ENCODE measurements at regions of chr12 and their contacts with region 1.

Region 1: DNA sequence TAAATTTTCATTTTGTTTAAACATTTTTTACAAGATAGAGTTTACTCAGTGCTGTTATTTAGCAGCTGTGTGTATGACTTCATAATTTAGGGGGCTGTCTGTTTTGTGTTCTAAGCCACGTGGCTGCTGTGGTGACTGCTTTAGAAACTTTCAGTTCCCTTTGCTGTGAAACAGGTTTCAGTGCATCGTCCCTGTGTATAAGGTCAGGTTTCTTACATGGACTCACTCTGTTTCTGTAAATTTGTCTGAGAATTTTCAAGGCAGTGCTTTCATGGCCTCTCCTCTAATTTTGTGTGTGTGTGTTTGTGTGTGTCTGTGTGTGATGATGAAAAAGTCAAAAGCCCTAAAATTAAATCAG is 32.4 kb downstream of the BICD1 start:
- DNase-seq: peak; percentile 89
- ATAC-seq: peak; percentile 84
- H3K4me3 ChIP-seq: peak overlapping the region; percentile 32 to 72 (median 55)
- H3K4me3 Mint-ChIP-seq: peak overlapping the region; percentile 95
- H3K27ac ChIP-seq: peak overlapping the region; percentile 95 to 97
- H3K27ac Mint-ChIP-seq: peak overlapping the region; percentile 99
- H3K4me1 ChIP-seq: peaks cover 31 to 39% of the 10 kb centered on the region in 2 donors
- H3K4me1 Mint-ChIP-seq: peaks cover 57% of the 10 kb centered on the region
- H3K27me3 ChIP-seq: no peaks in the 10 kb centered on the region
- H3K27me3 Mint-ChIP-seq: no peaks in the 10 kb centered on the region
- CTCF ChIP-seq: no peak

Region 2: GRCh38 chr12:31325877-31326631 is 813.0 kb before region 1 on chr12 and contains the start of gene SINHCAF:
- CTCF ChIA-PET with region 1: no interaction called
- POLR2A ChIA-PET with region 1: no interaction called
- intact Hi-C with region 1: loop called (anchors 10 kb)
- DNase-seq: peak; percentile 99
- ATAC-seq: peak; percentile 64
- H3K4me3 ChIP-seq: peak within 1 kb of the TSS; percentile 70 to 96 (median 93)
- H3K4me3 Mint-ChIP-seq: peak within 1 kb of the TSS; percentile 98
- H3K27ac ChIP-seq: peak within 1 kb of the TSS; percentile 97
- H3K27ac Mint-ChIP-seq: peak within 1 kb of the TSS; percentile 99
- H3K4me1 ChIP-seq: peaks cover 27 to 36% of the 10 kb centered on the region in 2 donors
- H3K4me1 Mint-ChIP-seq: peaks cover 39% of the 10 kb centered on the region
- H3K27me3 ChIP-seq: no peaks in the 10 kb centered on the region
- H3K27me3 Mint-ChIP-seq: no peaks in the 10 kb centered on the region
- CTCF ChIP-seq: no peak
- total RNA-seq, gene SINHCAF: 127 and 129 TPM in 2 replicates

Region 3: DNA sequence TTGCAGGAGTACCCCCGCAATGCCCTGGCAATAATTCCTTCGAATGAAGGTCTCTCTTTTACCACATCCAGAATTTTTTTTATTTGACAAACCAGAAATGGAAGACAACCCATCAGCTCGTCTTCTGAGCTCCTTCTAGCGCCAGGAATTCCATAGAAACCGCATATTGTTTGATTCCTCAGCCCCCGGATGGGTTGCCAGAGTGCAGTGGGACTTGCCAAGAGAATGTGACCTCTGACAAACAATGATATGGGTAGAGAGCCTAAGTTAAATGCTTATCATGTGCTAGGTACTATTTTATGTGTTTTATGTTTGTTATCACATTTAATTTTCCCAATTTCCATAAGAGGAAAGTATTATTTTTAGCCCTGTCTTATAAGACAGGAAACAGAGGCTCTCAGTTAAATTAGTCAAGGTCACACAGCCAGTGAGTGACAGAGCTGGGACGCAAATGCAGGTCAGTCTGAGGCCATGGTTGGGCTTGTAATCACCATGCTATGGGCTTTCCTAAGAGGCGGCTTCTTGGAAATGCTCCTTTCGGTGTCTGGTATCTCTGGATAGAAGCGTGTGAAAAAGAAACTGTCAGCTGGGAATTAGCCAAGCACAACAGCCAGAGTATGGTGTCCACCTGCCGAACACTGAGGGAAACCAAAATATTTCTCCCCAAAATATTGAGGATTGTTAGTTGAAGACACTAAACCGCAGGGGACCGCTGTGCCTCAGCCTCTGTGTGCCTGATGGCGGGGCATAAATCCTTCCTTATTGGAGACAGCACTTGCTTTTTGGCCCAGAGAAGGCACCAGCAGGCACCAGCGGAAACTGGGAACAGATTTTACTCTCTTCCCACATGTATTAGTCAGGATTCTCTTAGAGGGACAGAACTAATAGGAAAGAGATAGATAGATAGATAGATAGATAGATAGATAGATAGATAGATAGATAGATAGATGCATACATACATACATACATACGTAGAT is 509.0 kb before region 1 on chr12:
- CTCF ChIA-PET with region 1: no interaction called
- POLR2A ChIA-PET with region 1: no interaction called
- intact Hi-C with region 1: no loop called
- DNase-seq: no peak
- ATAC-seq: no peak
- H3K4me3 ChIP-seq: no peak overlapping the region
- H3K4me3 Mint-ChIP-seq: no peak overlapping the region
- H3K27ac ChIP-seq: no peak overlapping the region
- H3K27ac Mint-ChIP-seq: no peak overlapping the region
- H3K4me1 ChIP-seq: peaks cover 13% of the 10 kb centered on the region in 2 donors
- H3K4me1 Mint-ChIP-seq: peaks cover 29% of the 10 kb centered on the region
- H3K27me3 ChIP-seq: no peaks in the 10 kb centered on the region
- H3K27me3 Mint-ChIP-seq: no peaks in the 10 kb centered on the region
- CTCF ChIP-seq: no peak

Region 4: DNA sequence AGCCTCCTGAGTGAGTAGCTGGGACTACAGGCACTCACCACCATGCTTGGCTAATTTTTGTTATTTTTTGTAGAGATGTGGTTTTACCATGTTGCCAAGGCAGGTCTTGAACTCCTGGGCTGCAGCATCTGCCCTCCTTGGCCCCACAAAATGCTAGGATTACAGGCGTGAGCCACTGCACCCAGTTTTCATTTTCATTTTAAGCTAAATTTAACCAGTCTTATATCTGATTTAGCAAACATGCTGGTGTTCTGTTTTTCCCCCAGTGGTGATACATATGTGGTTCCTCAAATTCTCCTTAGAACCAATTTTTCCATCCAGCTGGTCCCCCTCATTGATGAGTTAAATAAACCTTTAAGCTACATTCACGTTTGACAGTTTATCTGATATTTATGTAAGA is 76.2 kb before region 1 on chr12:
- CTCF ChIA-PET with region 1: interaction called, 5 read pairs
- POLR2A ChIA-PET with region 1: no interaction called
- intact Hi-C with region 1: loop called (anchors 5 kb)
- DNase-seq: peak; percentile 8
- ATAC-seq: no peak
- H3K4me3 ChIP-seq: no peak overlapping the region
- H3K4me3 Mint-ChIP-seq: no peak overlapping the region
- H3K27ac ChIP-seq: no peak overlapping the region
- H3K27ac Mint-ChIP-seq: no peak overlapping the region
- H3K4me1 ChIP-seq: peaks cover 10 to 12% of the 10 kb centered on the region in 2 donors
- H3K4me1 Mint-ChIP-seq: peaks cover 13% of the 10 kb centered on the region
- H3K27me3 ChIP-seq: no peaks in the 10 kb centered on the region
- H3K27me3 Mint-ChIP-seq: no peaks in the 10 kb centered on the region
- CTCF ChIP-seq: no peak

Region 5: GRCh38 chr12:32264961-32265360 is 125.9 kb after region 1 on chr12:
- CTCF ChIA-PET with region 1: no interaction called
- POLR2A ChIA-PET with region 1: interaction called, 5 read pairs
- intact Hi-C with region 1: loop called (anchors 2 kb)
- DNase-seq: peak; percentile 84
- ATAC-seq: peak; percentile 77
- H3K4me3 ChIP-seq: peak overlapping the region in 1 of 5 experiments; percentile 11
- H3K4me3 Mint-ChIP-seq: peak overlapping the region; percentile 33
- H3K27ac ChIP-seq: peak overlapping the region; percentile 95 to 98
- H3K27ac Mint-ChIP-seq: peak overlapping the region; percentile 82
- H3K4me1 ChIP-seq: peaks cover 39 to 40% of the 10 kb centered on the region in 2 donors
- H3K4me1 Mint-ChIP-seq: peaks cover 37% of the 10 kb centered on the region
- H3K27me3 ChIP-seq: no peaks in the 10 kb centered on the region
- H3K27me3 Mint-ChIP-seq: no peaks in the 10 kb centered on the region
- CTCF ChIP-seq: no peak

Region 6: GRCh38 chr12:32302218-32303173 is 163.5 kb after region 1 on chr12:
- CTCF ChIA-PET with region 1: no interaction called
- POLR2A ChIA-PET with region 1: interaction called, 8 read pairs
- intact Hi-C with region 1: loop called (anchors 10 kb)
- DNase-seq: peak; percentile 38
- ATAC-seq: peak; percentile 96
- H3K4me3 ChIP-seq: no peak overlapping the region
- H3K4me3 Mint-ChIP-seq: peak overlapping the region; percentile 57
- H3K27ac ChIP-seq: peak overlapping the region; percentile 20 to 75
- H3K27ac Mint-ChIP-seq: peak overlapping the region; percentile 70
- H3K4me1 ChIP-seq: peaks cover 23 to 26% of the 10 kb centered on the region in 2 donors
- H3K4me1 Mint-ChIP-seq: peaks cover 30% of the 10 kb centered on the region
- H3K27me3 ChIP-seq: no peaks in the 10 kb centered on the region
- H3K27me3 Mint-ChIP-seq: no peaks in the 10 kb centered on the region
- CTCF ChIP-seq: peak; percentile 78

Region 7: GRCh38 chr12:33427072-33427471 is 1288.0 kb after region 1 on chr12:
- CTCF ChIA-PET with region 1: no interaction called
- POLR2A ChIA-PET with region 1: no interaction called
- intact Hi-C with region 1: no loop called
- DNase-seq: no peak
- ATAC-seq: no peak
- H3K4me3 ChIP-seq: no peak overlapping the region
- H3K4me3 Mint-ChIP-seq: no peak overlapping the region
- H3K27ac ChIP-seq: no peak overlapping the region
- H3K27ac Mint-ChIP-seq: no peak overlapping the region
- H3K4me1 ChIP-seq: no peaks in the 10 kb centered on the region
- H3K4me1 Mint-ChIP-seq: no peaks in the 10 kb centered on the region
- H3K27me3 ChIP-seq: no peaks in the 10 kb centered on the region
- H3K27me3 Mint-ChIP-seq: no peaks in the 10 kb centered on the region
- CTCF ChIP-seq: no peak